ENCODE measurements at regions of chr1 and their contacts with region 1.

Region 1: DNA sequence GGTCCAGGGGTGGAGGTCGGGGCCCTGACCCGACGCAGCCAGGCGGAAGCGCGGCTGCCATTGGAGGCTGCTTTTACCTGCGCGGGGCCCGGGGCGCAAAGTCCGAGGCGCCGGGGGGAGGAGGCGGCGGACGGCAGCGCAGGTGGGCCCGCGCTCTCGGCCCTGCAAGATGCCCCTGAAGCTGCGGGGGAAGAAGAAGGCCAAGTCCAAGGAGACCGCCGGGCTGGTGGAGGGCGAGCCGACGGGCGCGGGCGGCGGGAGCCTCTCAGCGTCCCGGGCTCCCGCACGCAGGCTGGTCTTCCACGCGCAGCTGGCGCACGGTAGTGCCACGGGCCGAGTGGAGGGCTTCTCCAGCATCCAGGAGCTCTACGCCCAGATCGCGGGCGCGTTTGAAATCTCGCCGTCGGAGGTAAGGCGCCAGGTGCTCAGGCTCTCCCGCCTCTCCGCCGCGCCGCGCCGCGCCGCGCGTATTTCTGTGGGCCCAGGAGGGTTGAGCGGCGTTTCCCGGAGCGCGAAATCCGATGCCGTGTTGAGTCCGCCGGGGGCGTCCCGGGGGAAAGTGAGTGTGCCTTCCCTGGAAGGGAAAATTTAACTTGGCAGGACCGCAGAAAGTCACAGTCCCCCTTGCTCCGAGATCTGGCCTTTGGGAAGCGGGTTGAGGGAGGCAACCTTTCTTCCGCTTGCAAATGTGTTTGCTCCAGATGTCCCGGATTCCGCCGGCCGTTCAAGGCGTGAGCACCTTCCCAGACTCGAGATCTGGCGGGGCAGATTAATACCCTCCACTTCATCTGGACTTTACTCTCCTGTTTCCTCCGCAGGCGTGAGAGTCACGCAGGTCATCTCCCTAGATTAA is at the start of gene GIPC2:
- DNase-seq: peak; percentile 80
- H3K4me3 ChIP-seq: peak within 1 kb of the TSS; percentile 55 to 82 (median 64)
- H3K27ac ChIP-seq: peak within 1 kb of the TSS; percentile 67 to 94 (median 85)
- H3K4me1 ChIP-seq: peaks cover 5 to 28% (median 20%) of the 10 kb centered on the region in 6 donors
- H3K27me3 ChIP-seq: peaks cover 0 to 46% (median 22%) of the 10 kb centered on the region in 7 donors
- CTCF ChIP-seq: no peak
- POLR2A ChIP-seq: no peak
- total RNA-seq, gene GIPC2: 27.9 to 49.9 (median 43.7) TPM

Region 2: GRCh38 chr1:78101514-78101913 is 55.4 kb after region 1 on chr1:
- intact Hi-C with region 1: loop called (anchors 10 kb)
- DNase-seq: no peak
- H3K4me3 ChIP-seq: no peak overlapping the region
- H3K27ac ChIP-seq: peak overlapping the region; percentile 44 to 79 (median 72)
- H3K4me1 ChIP-seq: peaks cover 0 to 13% (median 0%) of the 10 kb centered on the region in 6 donors
- H3K27me3 ChIP-seq: no peaks in the 10 kb centered on the region
- CTCF ChIP-seq: no peak
- POLR2A ChIP-seq: no peak